Sciatic nerve (tissue), 2 donors: ENCODE measurements at regions of chr2 and their contacts with region 1.

Region 1: GRCh38 chr2:142834021-142834420 is 43.4 kb upstream of the KYNU start:
- DNase-seq: no peak
- ATAC-seq: no peak

Region 2: GRCh38 chr2:142515493-142515892 is 318.5 kb before region 1 on chr2:
- intact Hi-C with region 1: loop called (anchors 5 kb)
- DNase-seq: no peak
- ATAC-seq: no peak

Region 3: GRCh38 chr2:142796161-142796560 is 37.9 kb before region 1 on chr2:
- intact Hi-C with region 1: no loop called
- DNase-seq: no peak
- ATAC-seq: no peak